ENCODE measurements at regions of chr6 and their contacts with region 1.

Region 1: DNA sequence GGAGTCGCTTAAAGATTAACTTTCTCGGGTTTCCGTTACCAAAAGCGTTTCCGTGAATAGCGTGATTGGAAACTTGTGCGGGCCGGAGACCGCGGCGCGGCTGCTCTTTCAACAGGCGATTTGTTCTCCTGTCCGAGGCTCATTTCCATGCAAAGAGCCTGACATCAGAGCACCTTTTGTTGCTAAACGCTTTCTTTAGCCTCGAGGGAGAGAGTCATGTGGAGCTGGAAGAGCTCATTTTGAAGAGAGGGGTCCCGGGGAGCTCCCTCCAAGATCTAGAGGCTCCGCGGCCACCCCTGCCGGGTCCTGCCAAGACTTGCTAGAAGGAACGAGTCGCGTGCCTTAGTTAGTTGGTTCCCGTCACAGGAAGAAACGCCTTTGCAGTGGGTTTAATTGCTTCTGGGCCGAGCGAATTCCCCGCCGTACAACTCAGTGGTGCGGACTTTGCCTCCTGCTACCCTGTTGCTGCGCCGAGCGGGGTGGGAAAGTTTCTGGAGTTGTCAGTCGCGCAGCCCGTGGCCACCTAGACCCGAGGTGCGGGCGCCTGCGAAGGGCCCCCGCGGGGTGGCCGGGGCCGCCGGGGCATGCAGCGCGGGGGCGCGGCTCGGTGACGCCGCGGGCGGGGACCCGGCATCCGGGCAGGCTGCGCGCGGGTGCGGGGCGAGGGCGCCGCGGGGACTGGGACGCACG is at the start of gene SASH1:
- DNase-seq: peak; percentile 45 to 84
- H3K4me3 ChIP-seq: peak within 1 kb of the TSS; percentile 79
- H3K27ac ChIP-seq: peak within 1 kb of the TSS; percentile 85
- H3K4me1 ChIP-seq: peaks cover 36% of the 10 kb centered on the region
- H3K27me3 ChIP-seq: no peaks in the 10 kb centered on the region
- CTCF ChIP-seq: no peak
- total RNA-seq, gene SASH1: 32.9 and 35.5 TPM in 2 replicates

Region 2: GRCh38 chr6:148192310-148192709 is 150.2 kb before region 1 on chr6:
- CTCF ChIA-PET with region 1: no interaction called
- POLR2A ChIA-PET with region 1: no interaction called
- intact Hi-C with region 1: loop called (anchors 2 kb)
- DNase-seq: peak in 1 of 2 experiments; percentile 68
- H3K4me3 ChIP-seq: peak overlapping the region; percentile 47; the same call in 1 of the 2 replicates
- H3K27ac ChIP-seq: peak overlapping the region; percentile 99
- H3K4me1 ChIP-seq: peaks cover 53% of the 10 kb centered on the region
- H3K27me3 ChIP-seq: no peaks in the 10 kb centered on the region
- CTCF ChIP-seq: no peak

Region 3: DNA sequence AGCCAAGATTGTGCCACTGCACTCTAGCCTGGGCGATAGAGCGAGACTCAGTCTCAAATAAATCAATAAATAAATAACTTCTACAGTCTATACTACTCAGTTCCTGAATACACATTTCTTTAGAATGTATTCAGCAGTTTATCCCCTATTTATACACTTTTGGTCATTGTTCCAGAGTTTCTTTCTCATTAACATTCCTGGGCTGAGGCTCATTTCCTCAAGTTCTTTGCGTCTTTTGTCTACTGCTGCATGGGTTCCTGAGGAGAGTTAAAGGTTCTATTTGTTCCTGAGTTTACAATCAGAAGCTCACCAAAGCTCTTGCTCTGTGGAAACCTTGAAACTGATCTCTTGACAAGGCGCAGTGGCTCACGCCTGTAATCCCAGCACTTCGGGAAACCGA is 37.5 kb before region 1 on chr6:
- CTCF ChIA-PET with region 1: no interaction called
- POLR2A ChIA-PET with region 1: no interaction called
- intact Hi-C with region 1: loop called (anchors 1 kb)
- DNase-seq: no peak
- H3K4me3 ChIP-seq: no peak overlapping the region
- H3K27ac ChIP-seq: no peak overlapping the region
- H3K4me1 ChIP-seq: peaks cover 34% of the 10 kb centered on the region
- H3K27me3 ChIP-seq: no peaks in the 10 kb centered on the region
- CTCF ChIP-seq: no peak

Region 4: GRCh38 chr6:148407372-148407771 is 64.9 kb after region 1 on chr6:
- CTCF ChIA-PET with region 1: no interaction called
- POLR2A ChIA-PET with region 1: no interaction called
- intact Hi-C with region 1: loop called (anchors 10 kb)
- DNase-seq: peak; percentile 9 to 86
- H3K4me3 ChIP-seq: no peak overlapping the region
- H3K27ac ChIP-seq: peak overlapping the region; percentile 47
- H3K4me1 ChIP-seq: peaks cover 45% of the 10 kb centered on the region
- H3K27me3 ChIP-seq: no peaks in the 10 kb centered on the region
- CTCF ChIP-seq: no peak

Region 5: GRCh38 chr6:148440877-148441453 is 98.5 kb after region 1 on chr6:
- CTCF ChIA-PET with region 1: no interaction called
- POLR2A ChIA-PET with region 1: interaction called, 3 read pairs
- intact Hi-C with region 1: loop called (anchors 2 kb)
- DNase-seq: peak; percentile 59 to 91
- H3K4me3 ChIP-seq: no peak overlapping the region
- H3K27ac ChIP-seq: peak overlapping the region; percentile 85
- H3K4me1 ChIP-seq: peaks cover 58% of the 10 kb centered on the region
- H3K27me3 ChIP-seq: no peaks in the 10 kb centered on the region
- CTCF ChIP-seq: no peak

Region 6: DNA sequence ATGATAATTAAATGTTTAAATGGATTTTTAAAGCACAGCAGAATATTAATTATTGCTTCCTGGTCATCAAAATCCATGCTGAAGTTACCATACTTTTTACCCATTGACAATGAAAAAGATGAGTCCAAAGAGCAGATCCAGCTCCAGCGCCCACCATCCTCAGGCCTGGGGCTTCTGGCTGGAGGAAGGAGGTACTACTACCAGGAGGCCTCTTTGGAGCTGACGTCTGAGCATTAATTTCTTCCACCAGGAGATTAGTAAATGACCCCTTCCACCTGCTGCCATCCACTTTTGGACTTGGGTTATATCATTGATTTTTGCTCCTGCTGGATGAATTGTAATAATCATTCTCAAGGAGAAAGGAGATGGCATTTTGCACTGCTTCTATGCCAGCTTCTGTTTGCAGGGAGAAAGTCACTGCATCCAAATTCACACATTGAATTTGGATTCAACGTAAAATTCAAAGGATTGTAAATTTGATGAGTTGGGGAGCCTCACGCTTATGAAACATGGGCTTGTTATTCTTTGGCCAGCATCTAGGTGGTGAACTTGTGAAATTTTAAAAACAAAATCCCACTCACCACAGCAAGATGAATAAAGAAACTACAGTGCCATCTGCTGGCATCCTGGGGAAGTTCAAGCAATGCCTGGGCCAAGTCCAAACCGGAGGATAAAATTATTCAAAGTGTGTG is 122.0 kb after region 1 on chr6:
- CTCF ChIA-PET with region 1: no interaction called
- POLR2A ChIA-PET with region 1: no interaction called
- intact Hi-C with region 1: loop called (anchors 1 kb)
- DNase-seq: peak; percentile 53 to 63
- H3K4me3 ChIP-seq: no peak overlapping the region
- H3K27ac ChIP-seq: no peak overlapping the region
- H3K4me1 ChIP-seq: peaks cover 7% of the 10 kb centered on the region
- H3K27me3 ChIP-seq: no peaks in the 10 kb centered on the region
- CTCF ChIP-seq: peak; percentile 96

Measured in PC-9 (cell line).